SK-N-SH (cell line): ENCODE measurements at regions of chr10 and their contacts with region 1.

Region 1: GRCh38 chr10:20768843-20769242 is 128.3 kb downstream of the NEBL start:
- DNase-seq: peak; percentile 4
- H3K4me3 ChIP-seq: no peak overlapping the region
- H3K27ac ChIP-seq: no peak overlapping the region
- H3K4me1 ChIP-seq: no peaks in the 10 kb centered on the region; a peak in 1 of 4 replicates
- H3K27me3 ChIP-seq: no peaks in the 10 kb centered on the region
- CTCF ChIP-seq: peak; percentile 50
- EP300 ChIP-seq: no peak
- RAD21 ChIP-seq: peak; percentile 69

Region 2: GRCh38 chr10:19412531-19412930 is 1356.3 kb before region 1 on chr10:
- CTCF ChIA-PET with region 1: interaction called, 16 read pairs
- POLR2A ChIA-PET with region 1: no interaction called
- DNase-seq: peak; percentile 19
- H3K4me3 ChIP-seq: no peak overlapping the region
- H3K27ac ChIP-seq: no peak overlapping the region
- H3K4me1 ChIP-seq: no peaks in the 10 kb centered on the region
- H3K27me3 ChIP-seq: no peaks in the 10 kb centered on the region
- CTCF ChIP-seq: peak; percentile 56
- EP300 ChIP-seq: no peak
- RAD21 ChIP-seq: peak; percentile 83

Region 3: DNA sequence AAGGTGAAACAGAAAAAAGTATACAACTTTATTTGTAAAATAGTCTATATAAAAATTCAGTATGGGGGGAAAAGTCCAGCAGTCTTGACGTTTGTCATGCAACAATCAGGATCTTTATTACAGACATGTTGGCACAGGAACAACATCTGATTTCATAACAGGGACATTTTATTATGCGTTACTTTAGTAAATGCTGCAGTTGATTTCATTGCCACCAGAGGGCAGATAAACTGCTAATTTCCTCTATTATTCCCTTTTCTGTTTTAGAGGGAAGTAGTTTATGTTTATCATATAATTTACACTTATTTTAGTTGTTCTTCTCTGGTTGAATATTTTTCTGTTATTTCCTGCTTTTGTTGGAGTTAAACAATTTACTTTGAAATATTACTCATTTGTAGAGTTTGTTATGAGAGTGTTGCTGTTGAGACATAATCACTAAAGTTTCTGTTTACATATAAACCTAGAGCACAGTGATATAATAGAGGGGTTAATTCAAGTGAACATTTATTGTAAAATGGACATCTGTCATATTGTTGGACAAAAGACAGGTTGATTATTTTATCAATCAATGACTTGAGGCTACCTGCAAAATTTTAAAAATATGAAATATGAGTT is 949.3 kb before region 1 on chr10:
- CTCF ChIA-PET with region 1: interaction called, 11 read pairs
- POLR2A ChIA-PET with region 1: no interaction called
- DNase-seq: peak; percentile 66
- H3K4me3 ChIP-seq: peak overlapping the region in 1 of 2 experiments; percentile 1; a peak in 1 of 4 replicates
- H3K27ac ChIP-seq: no peak overlapping the region
- H3K4me1 ChIP-seq: peaks cover 0 to 16% of the 10 kb centered on the region in 2 experiments; a peak in 3 of 4 replicates
- H3K27me3 ChIP-seq: peaks cover 20% of the 10 kb centered on the region
- CTCF ChIP-seq: peak; percentile 92
- EP300 ChIP-seq: no peak
- RAD21 ChIP-seq: peak; percentile 77

Region 4: DNA sequence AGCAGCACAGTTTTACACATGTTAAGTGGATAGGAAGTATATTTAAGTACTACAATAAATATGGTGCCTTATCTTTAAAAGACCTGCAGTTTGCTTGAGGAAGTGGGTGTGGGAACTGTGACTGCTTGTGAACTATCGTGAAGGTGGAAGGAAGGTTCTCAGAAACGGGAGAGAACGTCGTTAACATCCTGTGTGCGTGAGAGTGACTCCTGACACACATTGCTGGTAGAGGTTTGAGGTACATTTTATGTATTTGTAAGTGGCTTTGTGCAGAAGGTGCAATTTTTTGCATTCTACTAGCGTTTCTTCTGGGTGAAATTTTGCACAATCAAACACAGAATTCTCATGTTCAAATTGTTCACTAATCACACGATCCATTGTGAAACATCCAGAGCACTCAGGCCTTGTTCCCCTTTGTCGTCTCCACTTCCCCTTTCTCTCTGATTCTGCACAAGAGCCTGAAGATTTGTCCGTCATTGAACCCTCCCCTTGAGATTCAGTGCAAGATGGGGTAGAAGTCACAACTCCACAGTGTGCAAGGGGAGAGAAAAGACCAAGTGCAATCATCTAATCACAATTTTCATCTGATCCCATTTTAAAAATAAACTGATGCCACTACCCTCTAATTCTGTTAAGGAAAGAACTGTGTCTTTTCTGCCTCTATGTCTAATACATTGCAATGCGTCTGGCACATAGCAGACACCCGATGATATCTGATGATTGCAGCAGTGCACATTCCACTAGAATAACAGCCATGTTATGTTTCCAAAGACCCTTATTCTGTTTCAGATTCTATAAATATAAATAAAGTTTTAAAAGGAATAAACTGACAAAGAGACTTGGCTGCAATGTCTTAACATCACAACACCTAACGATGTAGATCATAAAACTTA is 151.7 kb before region 1 on chr10:
- CTCF ChIA-PET with region 1: no interaction called
- POLR2A ChIA-PET with region 1: no interaction called
- DNase-seq: no peak
- H3K4me3 ChIP-seq: no peak overlapping the region
- H3K27ac ChIP-seq: no peak overlapping the region
- H3K4me1 ChIP-seq: peaks cover 0 to 3% of the 10 kb centered on the region in 2 experiments; a peak in 2 of 4 replicates
- H3K27me3 ChIP-seq: no peaks in the 10 kb centered on the region
- CTCF ChIP-seq: no peak
- EP300 ChIP-seq: no peak
- RAD21 ChIP-seq: no peak

Region 5: DNA sequence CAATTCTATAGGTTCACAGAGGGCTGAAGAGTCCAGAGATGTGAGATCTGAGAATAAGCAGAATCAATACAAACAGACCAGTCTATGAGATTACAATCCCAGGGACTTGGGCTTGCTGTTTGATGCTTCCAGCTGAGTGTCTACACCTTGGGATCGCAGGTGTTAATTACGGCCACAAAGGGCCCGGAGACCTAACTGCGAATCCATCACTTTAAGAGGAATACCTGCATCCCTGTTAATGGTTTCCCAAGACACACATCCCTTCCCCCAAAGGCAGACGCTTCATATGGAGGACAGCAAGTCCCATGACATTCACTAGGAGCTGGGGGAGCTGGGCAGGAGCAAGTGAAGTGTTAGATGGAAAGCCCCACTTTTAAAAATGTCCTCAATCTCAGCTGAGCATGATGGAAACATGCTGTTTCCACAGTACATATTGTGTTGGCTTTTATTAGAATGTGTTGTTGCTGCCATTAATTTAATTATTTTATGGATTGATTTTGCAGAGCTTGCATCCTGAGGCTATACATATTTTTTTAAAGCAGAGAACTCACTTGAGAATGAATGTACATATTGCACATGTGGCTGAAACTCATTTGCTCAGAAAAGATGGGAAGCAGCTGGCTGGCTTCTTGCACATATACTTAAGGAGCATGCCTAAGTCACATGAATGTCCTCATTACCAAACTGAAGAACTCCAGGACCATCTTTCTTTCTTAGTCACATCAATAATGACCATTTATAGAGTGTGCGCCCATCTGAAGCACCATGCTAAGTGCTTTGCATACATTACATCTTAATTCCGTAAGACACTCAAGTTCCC is 23.1 kb before region 1 on chr10:
- CTCF ChIA-PET with region 1: interaction called, 11 read pairs
- POLR2A ChIA-PET with region 1: no interaction called
- DNase-seq: no peak
- H3K4me3 ChIP-seq: no peak overlapping the region
- H3K27ac ChIP-seq: no peak overlapping the region
- H3K4me1 ChIP-seq: peaks cover 0 to 3% of the 10 kb centered on the region in 2 experiments; a peak in 2 of 4 replicates
- H3K27me3 ChIP-seq: no peaks in the 10 kb centered on the region
- CTCF ChIP-seq: no peak
- EP300 ChIP-seq: no peak
- RAD21 ChIP-seq: no peak

Region 6: DNA sequence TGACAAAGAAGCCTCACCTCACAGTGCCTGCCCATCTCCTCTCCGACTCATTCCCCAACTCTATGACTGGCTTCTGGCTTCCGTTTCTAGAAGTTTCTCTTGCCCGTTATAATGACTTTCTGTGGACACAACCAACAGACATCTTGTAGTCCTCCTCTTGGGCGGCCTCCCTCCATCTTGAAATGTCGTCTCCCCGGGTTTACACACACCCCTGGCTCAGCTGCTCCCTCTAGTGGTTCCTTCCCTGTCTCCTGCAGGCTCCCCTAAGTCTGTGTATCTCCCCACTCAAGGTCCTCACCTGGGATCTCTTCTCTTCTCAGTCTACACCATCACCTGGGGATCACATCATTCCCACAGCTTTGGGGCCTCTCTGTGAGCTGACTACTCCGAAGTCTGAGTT is 251.7 kb after region 1 on chr10:
- CTCF ChIA-PET with region 1: no interaction called
- POLR2A ChIA-PET with region 1: no interaction called
- DNase-seq: peak; percentile 19
- H3K4me3 ChIP-seq: no peak overlapping the region
- H3K27ac ChIP-seq: no peak overlapping the region
- H3K4me1 ChIP-seq: no peaks in the 10 kb centered on the region; a peak in 1 of 4 replicates
- H3K27me3 ChIP-seq: no peaks in the 10 kb centered on the region
- CTCF ChIP-seq: peak; percentile 45
- EP300 ChIP-seq: no peak
- RAD21 ChIP-seq: no peak; the same call in 1 of the 2 replicates